ENCODE measurements at regions of chr10 and their contacts with region 1.

Region 1: GRCh38 chr10:6964543-6964942 is 384.5 kb upstream of the PRKCQ start:
- DNase-seq: no peak
- ATAC-seq: no peak
- H3K4me3 ChIP-seq: no peak overlapping the region
- H3K4me3 Mint-ChIP-seq: no peak overlapping the region
- H3K27ac ChIP-seq: no peak overlapping the region
- H3K27ac Mint-ChIP-seq: no peak overlapping the region
- H3K4me1 ChIP-seq: no peaks in the 10 kb centered on the region
- H3K4me1 Mint-ChIP-seq: peaks cover 24 to 35% of the 10 kb centered on the region in 2 donors
- H3K27me3 ChIP-seq: no peaks in the 10 kb centered on the region
- H3K27me3 Mint-ChIP-seq: peaks cover 0 to 4% of the 10 kb centered on the region in 2 donors
- CTCF ChIP-seq: no peak

Region 2: GRCh38 chr10:6995831-6996230 is 31.3 kb after region 1 on chr10:
- intact Hi-C with region 1: loop called (anchors 5 kb)
- DNase-seq: no peak
- ATAC-seq: no peak
- H3K4me3 ChIP-seq: no peak overlapping the region
- H3K4me3 Mint-ChIP-seq: no peak overlapping the region
- H3K27ac ChIP-seq: no peak overlapping the region
- H3K27ac Mint-ChIP-seq: no peak overlapping the region
- H3K4me1 ChIP-seq: peaks cover 35% of the 10 kb centered on the region
- H3K4me1 Mint-ChIP-seq: peaks cover 44 to 48% of the 10 kb centered on the region in 2 donors
- H3K27me3 ChIP-seq: no peaks in the 10 kb centered on the region
- H3K27me3 Mint-ChIP-seq: no peaks in the 10 kb centered on the region
- CTCF ChIP-seq: no peak

Region 3: GRCh38 chr10:7687228-7687907 is 722.8 kb after region 1 on chr10:
- intact Hi-C with region 1: no loop called
- DNase-seq: peak; percentile 44 to 89
- ATAC-seq: peak; percentile 81 to 98 (median 90)
- H3K4me3 ChIP-seq: no peak overlapping the region
- H3K4me3 Mint-ChIP-seq: no peak overlapping the region
- H3K27ac ChIP-seq: no peak overlapping the region
- H3K27ac Mint-ChIP-seq: no peak overlapping the region
- H3K4me1 ChIP-seq: no peaks in the 10 kb centered on the region
- H3K4me1 Mint-ChIP-seq: peaks cover 5% of the 10 kb centered on the region in 2 donors
- H3K27me3 ChIP-seq: no peaks in the 10 kb centered on the region
- H3K27me3 Mint-ChIP-seq: peaks cover 40 to 45% of the 10 kb centered on the region in 2 donors
- CTCF ChIP-seq: peak; percentile 70

Measured in natural killer cell (primary cell).